ENCODE measurements at regions of chr2 and their contacts with region 1.

Region 1: DNA sequence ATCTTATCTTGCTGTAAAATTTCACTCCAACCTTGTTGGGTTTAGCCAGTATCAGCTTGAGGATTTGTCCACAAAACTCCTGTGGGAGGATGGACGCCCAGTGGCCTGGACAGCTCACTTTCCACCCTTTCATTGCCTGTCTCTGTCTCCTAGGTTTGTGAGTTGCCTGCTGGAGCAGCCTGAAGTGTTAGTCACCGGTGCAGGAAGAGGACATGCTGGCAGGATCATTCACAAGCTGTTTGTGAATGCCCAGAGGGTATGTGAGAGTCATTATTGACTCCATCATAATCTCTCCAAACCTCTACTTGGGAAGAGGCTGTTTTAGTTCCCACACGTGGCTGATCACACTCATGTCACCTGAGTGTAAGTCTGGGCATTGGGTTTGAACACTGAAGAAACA is 112.3 kb downstream of the RAB3GAP1 start:
- DNase-seq: no peak
- ATAC-seq: peak in 2 of 4 donors; percentile 42 to 52
- H3K4me3 ChIP-seq: no peak overlapping the region
- H3K27ac ChIP-seq: no peak overlapping the region
- H3K4me1 ChIP-seq: no peaks in the 10 kb centered on the region
- H3K27me3 ChIP-seq: no peaks in the 10 kb centered on the region
- CTCF ChIP-seq: no peak

Region 2: DNA sequence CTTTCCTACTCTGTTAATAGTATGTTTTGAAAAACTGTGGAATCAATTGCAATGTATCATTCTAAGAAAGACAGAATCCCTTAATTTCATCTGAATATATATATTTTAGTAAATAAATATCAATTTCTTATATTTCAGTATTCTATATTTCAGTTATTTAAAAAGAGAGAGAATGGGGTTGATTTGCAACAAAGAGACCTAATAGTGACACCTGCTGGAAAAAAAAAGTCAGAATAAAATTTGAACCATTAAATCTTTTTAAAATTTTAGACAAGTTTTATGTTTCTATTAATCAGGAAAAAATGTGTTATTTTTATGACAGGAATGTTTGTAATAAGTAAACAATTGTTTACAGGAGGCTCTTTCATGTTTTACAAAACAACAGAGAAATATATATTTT is 266.5 kb before region 1 on chr2:
- intact Hi-C with region 1: no loop called
- DNase-seq: no peak
- ATAC-seq: no peak
- H3K4me3 ChIP-seq: no peak overlapping the region
- H3K27ac ChIP-seq: no peak overlapping the region
- H3K4me1 ChIP-seq: no peaks in the 10 kb centered on the region
- H3K27me3 ChIP-seq: no peaks in the 10 kb centered on the region
- CTCF ChIP-seq: peak; percentile 32

Region 3: GRCh38 chr2:135124924-135125886 is 39.2 kb before region 1 on chr2:
- intact Hi-C with region 1: loop called in 1 of 2 experiments (anchors 5 kb)
- DNase-seq: no peak
- ATAC-seq: no peak
- H3K4me3 ChIP-seq: no peak overlapping the region
- H3K27ac ChIP-seq: no peak overlapping the region
- H3K4me1 ChIP-seq: no peaks in the 10 kb centered on the region
- H3K27me3 ChIP-seq: no peaks in the 10 kb centered on the region
- CTCF ChIP-seq: no peak

Region 4: DNA sequence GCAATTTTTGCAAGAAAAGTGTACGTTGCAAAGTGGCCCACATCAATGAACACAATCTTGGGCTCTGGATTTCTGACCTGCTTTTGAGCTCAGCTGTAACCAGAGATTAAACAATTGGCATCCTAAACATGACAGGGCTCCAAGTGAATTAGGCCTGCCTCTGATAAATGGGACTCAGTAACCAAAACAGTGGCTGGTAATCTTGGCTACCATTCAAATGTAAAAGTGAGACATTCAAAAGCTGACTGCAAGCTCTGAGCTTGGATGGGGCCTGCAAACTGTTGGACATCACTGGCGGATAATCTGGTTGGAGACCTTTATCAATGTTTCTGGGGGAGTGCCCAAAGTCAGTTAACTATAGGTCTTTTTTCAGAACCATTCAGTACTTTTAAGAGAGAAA is 48.3 kb after region 1 on chr2:
- intact Hi-C with region 1: no loop called
- DNase-seq: no peak
- ATAC-seq: no peak
- H3K4me3 ChIP-seq: no peak overlapping the region
- H3K27ac ChIP-seq: no peak overlapping the region
- H3K4me1 ChIP-seq: no peaks in the 10 kb centered on the region
- H3K27me3 ChIP-seq: no peaks in the 10 kb centered on the region
- CTCF ChIP-seq: no peak

Region 5: GRCh38 chr2:135637456-135638087 is 473.1 kb after region 1 on chr2:
- intact Hi-C with region 1: loop called in 1 of 2 experiments (anchors 10 kb)
- DNase-seq: no peak
- ATAC-seq: no peak
- H3K4me3 ChIP-seq: no peak overlapping the region
- H3K27ac ChIP-seq: no peak overlapping the region
- H3K4me1 ChIP-seq: peaks cover 5% of the 10 kb centered on the region
- H3K27me3 ChIP-seq: no peaks in the 10 kb centered on the region
- CTCF ChIP-seq: no peak

Measured in psoas muscle (tissue), 8 donors.